Adrenal gland (tissue), 19 donors: ENCODE measurements at regions of chr5 and their contacts with region 1.

Region 1: GRCh38 chr5:150560401-150561193 is 52.7 kb downstream of the NDST1 start:
- DNase-seq: peak; percentile 84 to 98 (median 92)
- H3K4me3 ChIP-seq: no peak overlapping the region
- H3K27ac ChIP-seq: peak overlapping the region in 1 of 5 donors; percentile 28
- H3K4me1 ChIP-seq: no peaks in the 10 kb centered on the region
- H3K27me3 ChIP-seq: no peaks in the 10 kb centered on the region
- CTCF ChIP-seq: peak; percentile 90 to 99 (median 96)
- POLR2A ChIP-seq: no peak

Region 2: GRCh38 chr5:150412319-150413175 is 148.1 kb before region 1 on chr5 and contains the start of gene CD74:
- intact Hi-C with region 1: no loop called
- DNase-seq: peak; percentile 85 to 97 (median 95)
- H3K4me3 ChIP-seq: peak within 1 kb of the TSS in 3 of 4 donors; percentile 46 to 60 (median 50)
- H3K27ac ChIP-seq: peak within 1 kb of the TSS; percentile 81 to 98 (median 88)
- H3K4me1 ChIP-seq: peaks cover 23 to 28% of the 10 kb centered on the region in 2 donors
- H3K27me3 ChIP-seq: no peaks in the 10 kb centered on the region
- CTCF ChIP-seq: no peak
- POLR2A ChIP-seq: peak; percentile 93 to 95
- total RNA-seq, gene CD74: 71.4 to 3,185 (median 2,215) TPM

Region 3: DNA sequence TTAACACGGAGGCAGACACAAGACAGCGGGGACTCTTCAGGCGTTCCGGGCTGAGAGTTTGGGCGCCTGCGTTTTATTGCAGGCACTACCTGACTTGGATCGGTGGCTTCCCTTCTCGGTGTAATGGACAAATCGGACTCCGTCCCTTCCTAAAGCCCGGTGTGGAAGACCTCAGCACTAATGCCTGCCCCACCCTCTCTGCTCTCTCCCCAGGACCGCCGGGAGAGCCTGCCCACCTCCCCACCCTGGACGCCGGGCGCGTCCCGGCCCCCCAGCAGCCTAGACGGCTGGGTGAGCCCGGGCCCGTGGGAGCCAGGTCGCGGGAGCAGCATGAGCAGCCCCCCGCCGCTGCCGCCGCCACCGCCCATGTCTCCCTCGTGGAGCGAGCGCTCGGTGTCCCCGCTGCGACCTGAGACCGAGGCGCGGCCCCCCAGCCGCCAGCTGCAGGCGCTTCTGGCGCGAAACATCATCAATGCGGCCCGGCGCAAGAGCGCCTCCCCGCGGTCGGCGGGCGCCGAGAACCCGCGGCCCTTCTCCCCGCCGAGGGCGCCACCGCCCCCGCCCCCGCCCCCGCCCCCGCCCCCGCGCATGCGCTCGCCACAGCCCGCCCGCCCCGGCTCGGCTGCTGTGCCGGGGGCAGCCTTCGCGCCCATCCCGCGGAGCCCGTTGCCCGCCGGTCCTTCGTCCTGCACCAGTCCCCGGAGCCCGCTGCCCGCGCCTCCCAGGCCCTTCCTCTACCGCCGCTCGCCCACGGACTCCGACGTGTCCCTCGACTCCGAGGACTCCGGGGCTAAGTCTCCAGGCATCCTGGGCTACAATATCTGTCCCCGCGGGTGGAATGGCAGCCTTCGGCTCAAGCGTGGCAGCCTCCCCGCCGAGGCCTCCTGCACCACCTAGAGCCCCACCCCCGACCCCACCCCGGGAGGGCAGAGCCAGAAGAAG is 95.9 kb after region 1 on chr5:
- intact Hi-C with region 1: loop called (anchors 5 kb)
- DNase-seq: peak; percentile 64 to 86 (median 75)
- H3K4me3 ChIP-seq: peak overlapping the region in 2 of 4 donors; percentile 20 to 38
- H3K27ac ChIP-seq: peak overlapping the region in 4 of 5 donors; percentile 58 to 83 (median 71)
- H3K4me1 ChIP-seq: peaks cover 12 to 47% of the 10 kb centered on the region in 2 donors
- H3K27me3 ChIP-seq: no peaks in the 10 kb centered on the region
- CTCF ChIP-seq: peak in 5 of 6 experiments; percentile 21 to 79 (median 66)
- POLR2A ChIP-seq: no peak

Region 4: GRCh38 chr5:150700594-150701293 is 140.1 kb after region 1 on chr5 and contains the start of gene RBM22:
- intact Hi-C with region 1: loop called in 1 of 2 experiments (anchors 10 kb)
- DNase-seq: peak; percentile 90 to 97 (median 93)
- H3K4me3 ChIP-seq: peak within 1 kb of the TSS; percentile 34 to 87 (median 76)
- H3K27ac ChIP-seq: peak within 1 kb of the TSS; percentile 73 to 99 (median 90)
- H3K4me1 ChIP-seq: peaks cover 11 to 17% of the 10 kb centered on the region in 2 donors
- H3K27me3 ChIP-seq: no peaks in the 10 kb centered on the region
- CTCF ChIP-seq: peak; percentile 37 to 71 (median 53)
- POLR2A ChIP-seq: peak; percentile 87 to 94
- total RNA-seq, gene RBM22: 28.2 to 80.4 (median 37.4) TPM